ENCODE measurements at regions of chr15 and their contacts with region 1.

Region 1: GRCh38 chr15:94417501-94418293 is 186.3 kb downstream of the MCTP2 start:
- DNase-seq: no peak
- ATAC-seq: no peak
- H3K4me3 ChIP-seq: no peak overlapping the region
- H3K27ac ChIP-seq: no peak overlapping the region
- H3K4me1 ChIP-seq: peaks cover 0 to 6% (median 0%) of the 10 kb centered on the region in 12 donors
- H3K27me3 ChIP-seq: peaks cover 0 to 12% (median 0%) of the 10 kb centered on the region in 9 donors
- CTCF ChIP-seq: no peak
- POLR2A ChIP-seq: no peak

Region 2: GRCh38 chr15:94335616-94336015 is 82.1 kb before region 1 on chr15:
- intact Hi-C with region 1: no loop called
- DNase-seq: no peak
- ATAC-seq: no peak
- H3K4me3 ChIP-seq: no peak overlapping the region
- H3K27ac ChIP-seq: no peak overlapping the region
- H3K4me1 ChIP-seq: peaks cover 0 to 10% (median 0%) of the 10 kb centered on the region in 12 donors
- H3K27me3 ChIP-seq: peaks cover 0 to 7% (median 0%) of the 10 kb centered on the region in 9 donors
- CTCF ChIP-seq: no peak
- POLR2A ChIP-seq: no peak

Region 3: DNA sequence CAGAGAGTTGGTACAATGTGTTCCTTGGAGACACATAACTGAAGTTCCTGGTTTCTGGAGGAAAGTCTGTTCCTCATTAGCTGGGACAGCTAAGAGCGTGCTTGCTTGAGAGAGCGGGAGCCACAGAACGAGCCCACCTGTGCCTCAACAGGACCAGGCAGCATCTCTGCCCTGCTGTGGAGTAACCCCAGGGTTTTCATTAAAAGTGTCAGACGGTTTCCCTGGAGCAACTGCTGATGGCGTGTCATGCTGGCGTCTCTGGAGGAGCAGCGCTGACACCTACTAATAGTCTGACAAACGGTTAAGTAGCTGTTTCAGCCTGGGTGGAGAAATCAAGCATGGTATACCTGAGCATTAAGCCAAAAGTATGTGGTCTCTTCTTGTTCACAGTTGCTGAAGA is 36.3 kb before region 1 on chr15:
- intact Hi-C with region 1: loop called in 1 of 10 experiments (anchors 2 kb)
- DNase-seq: no peak
- ATAC-seq: no peak
- H3K4me3 ChIP-seq: no peak overlapping the region
- H3K27ac ChIP-seq: no peak overlapping the region
- H3K4me1 ChIP-seq: no peaks in the 10 kb centered on the region
- H3K27me3 ChIP-seq: no peaks in the 10 kb centered on the region
- CTCF ChIP-seq: no peak
- POLR2A ChIP-seq: no peak

Region 4: GRCh38 chr15:94563455-94563854 is 145.8 kb after region 1 on chr15:
- intact Hi-C with region 1: no loop called
- DNase-seq: no peak
- ATAC-seq: no peak
- H3K4me3 ChIP-seq: no peak overlapping the region
- H3K27ac ChIP-seq: no peak overlapping the region
- H3K4me1 ChIP-seq: no peaks in the 10 kb centered on the region
- H3K27me3 ChIP-seq: no peaks in the 10 kb centered on the region
- CTCF ChIP-seq: no peak
- POLR2A ChIP-seq: no peak